Caco-2 (cell line): ENCODE measurements at regions of chr10 and their contacts with region 1.

Region 1: DNA sequence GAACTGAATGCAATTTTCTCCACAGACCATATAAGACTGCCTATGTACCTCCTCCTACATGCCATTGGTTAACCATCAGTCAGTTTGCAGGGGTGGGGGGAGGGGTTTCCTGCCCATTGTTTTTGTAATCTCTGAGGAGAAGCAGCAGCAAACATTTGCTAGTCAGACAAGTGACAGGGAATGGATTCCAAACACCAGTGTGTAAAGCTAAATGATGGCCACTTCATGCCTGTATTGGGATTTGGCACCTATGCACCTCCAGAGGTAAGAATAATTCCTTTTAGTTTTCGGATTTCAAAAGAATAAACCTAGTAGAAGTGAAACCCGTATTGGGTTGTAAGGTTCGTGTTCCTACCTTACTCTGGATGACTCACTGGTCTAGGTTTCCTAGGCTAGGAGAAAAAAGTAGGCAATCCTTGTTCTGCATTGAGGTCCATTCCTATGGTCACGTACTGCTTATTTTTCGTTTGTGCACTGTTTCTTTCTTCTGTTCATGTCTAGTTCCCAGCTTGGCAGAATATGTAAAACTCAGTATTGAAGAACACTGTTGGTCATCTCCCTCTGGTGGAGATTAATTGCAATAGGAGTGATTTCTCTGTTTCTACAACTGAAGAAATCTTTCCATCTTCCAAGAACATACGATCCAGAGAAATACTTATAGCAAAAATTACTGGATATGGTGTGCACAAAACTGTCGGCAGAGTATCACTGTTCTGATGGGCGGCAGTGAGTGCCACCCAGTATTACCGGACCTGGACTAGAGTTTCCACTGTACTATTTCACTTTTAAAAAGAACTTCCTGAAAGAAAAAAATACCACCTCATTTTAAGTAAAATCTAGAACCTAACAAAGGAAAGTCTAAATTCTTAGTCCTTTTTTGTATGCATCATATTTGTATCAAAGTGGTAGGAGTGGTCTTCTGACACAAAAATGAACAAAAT is at the start of gene AKR1C3:
- DNase-seq: peak in 1 of 2 experiments; percentile 57
- H3K4me3 ChIP-seq: peak within 1 kb of the TSS; percentile 47
- H3K4me3 Mint-ChIP-seq: peak within 1 kb of the TSS; percentile 73
- H3K27ac Mint-ChIP-seq: peak within 1 kb of the TSS; percentile 67
- H3K4me1 ChIP-seq: peaks cover 9% of the 10 kb centered on the region
- H3K4me1 Mint-ChIP-seq: peaks cover 6% of the 10 kb centered on the region
- H3K27me3 ChIP-seq: no peaks in the 10 kb centered on the region
- H3K27me3 Mint-ChIP-seq: no peaks in the 10 kb centered on the region
- CTCF ChIP-seq: peak; percentile 70 to 80
- total RNA-seq, gene AKR1C3: 96.8 and 115 TPM in 2 replicates

Region 2: GRCh38 chr10:5014936-5015335 is 79.6 kb before region 1 on chr10:
- CTCF ChIA-PET with region 1: no interaction called
- POLR2A ChIA-PET with region 1: no interaction called
- intact Hi-C with region 1: loop called (anchors 1 kb)
- DNase-seq: peak; percentile 48 to 60
- H3K4me3 ChIP-seq: no peak overlapping the region
- H3K4me3 Mint-ChIP-seq: no peak overlapping the region
- H3K27ac Mint-ChIP-seq: no peak overlapping the region
- H3K4me1 ChIP-seq: 0 out of 2 replicates have a peak, but pooled peaks cover 1% of the 10 kb centered on the region
- H3K4me1 Mint-ChIP-seq: no peaks in the 10 kb centered on the region
- H3K27me3 ChIP-seq: no peaks in the 10 kb centered on the region
- H3K27me3 Mint-ChIP-seq: no peaks in the 10 kb centered on the region
- CTCF ChIP-seq: peak; percentile 55 to 67

Region 3: DNA sequence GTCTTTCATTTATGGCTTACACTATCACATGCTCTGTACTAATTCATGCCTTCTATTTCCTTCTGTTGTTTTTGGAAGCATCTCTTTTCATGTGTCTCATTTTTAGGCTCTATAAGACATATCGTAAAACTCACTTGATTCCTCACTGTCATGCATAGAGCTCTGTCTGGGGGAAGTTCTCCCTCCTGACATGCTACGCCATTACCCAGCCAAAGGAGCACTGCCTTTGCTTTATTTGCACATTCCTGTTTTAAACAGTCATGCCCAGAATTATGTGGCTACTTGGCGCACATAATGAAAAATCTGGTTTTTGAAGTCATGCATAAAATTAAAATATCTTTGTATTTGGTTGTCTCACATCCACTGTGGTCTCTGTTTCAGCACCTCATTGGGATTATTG is 17.9 kb before region 1 on chr10:
- CTCF ChIA-PET with region 1: interaction called, 3 read pairs
- POLR2A ChIA-PET with region 1: no interaction called
- intact Hi-C with region 1: loop called (anchors 1 kb)
- DNase-seq: no peak
- H3K4me3 ChIP-seq: no peak overlapping the region
- H3K4me3 Mint-ChIP-seq: no peak overlapping the region
- H3K27ac Mint-ChIP-seq: no peak overlapping the region
- H3K4me1 ChIP-seq: peaks cover 53% of the 10 kb centered on the region
- H3K4me1 Mint-ChIP-seq: peaks cover 56% of the 10 kb centered on the region
- H3K27me3 ChIP-seq: no peaks in the 10 kb centered on the region
- H3K27me3 Mint-ChIP-seq: no peaks in the 10 kb centered on the region
- CTCF ChIP-seq: no peak

Region 4: GRCh38 chr10:5199398-5199797 is 104.9 kb after region 1 on chr10:
- CTCF ChIA-PET with region 1: no interaction called
- POLR2A ChIA-PET with region 1: no interaction called
- intact Hi-C with region 1: loop called (anchors 5 kb)
- DNase-seq: no peak
- H3K4me3 ChIP-seq: no peak overlapping the region
- H3K4me3 Mint-ChIP-seq: no peak overlapping the region
- H3K27ac Mint-ChIP-seq: no peak overlapping the region
- H3K4me1 ChIP-seq: peaks cover 23% of the 10 kb centered on the region
- H3K4me1 Mint-ChIP-seq: peaks cover 11% of the 10 kb centered on the region
- H3K27me3 ChIP-seq: no peaks in the 10 kb centered on the region
- H3K27me3 Mint-ChIP-seq: no peaks in the 10 kb centered on the region
- CTCF ChIP-seq: no peak

Region 5: DNA sequence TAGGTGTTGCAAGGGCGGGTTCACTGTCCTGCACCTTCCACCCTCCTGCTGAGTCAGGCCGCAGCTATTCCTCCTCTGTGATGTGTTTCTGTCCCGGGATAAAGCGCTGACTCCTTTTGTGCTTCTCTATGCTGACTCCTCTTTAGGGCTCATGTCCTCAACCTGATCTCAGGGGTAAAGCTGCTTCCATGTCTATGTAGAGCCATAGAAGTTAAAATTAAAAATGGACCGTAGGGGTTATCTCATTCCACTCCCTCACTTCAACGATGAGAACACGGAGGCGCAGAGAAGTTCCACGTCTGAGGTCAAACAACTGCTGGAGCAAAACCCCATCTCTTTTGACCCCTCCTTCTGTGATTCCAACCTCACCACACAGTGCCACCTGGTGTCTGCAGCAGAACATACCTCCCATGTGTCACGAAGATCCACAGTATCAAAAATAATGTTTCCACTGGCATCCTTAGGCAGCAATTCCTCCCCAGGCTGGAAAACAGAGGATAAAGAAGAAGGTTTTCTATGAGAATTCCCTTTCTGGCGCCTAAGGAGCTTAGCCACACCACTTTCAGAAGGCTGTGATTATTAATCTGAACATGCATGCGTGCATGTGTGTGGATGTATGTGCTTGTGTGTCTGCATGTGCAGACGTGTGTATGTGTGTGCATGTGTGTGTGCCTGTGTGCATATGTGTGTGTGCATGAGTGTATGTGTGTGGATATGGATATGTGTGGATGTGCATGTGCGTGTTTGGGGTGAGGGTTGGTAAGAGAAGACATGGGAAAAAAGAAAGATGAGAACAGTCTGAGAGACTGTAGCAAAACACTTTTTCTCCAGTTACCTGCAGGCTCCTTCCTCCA is 189.0 kb after region 1 on chr10:
- CTCF ChIA-PET with region 1: no interaction called
- POLR2A ChIA-PET with region 1: no interaction called
- intact Hi-C with region 1: loop called (anchors 1 kb)
- DNase-seq: peak; percentile 81 to 83
- H3K4me3 ChIP-seq: no peak overlapping the region
- H3K4me3 Mint-ChIP-seq: peak overlapping the region; percentile 50
- H3K27ac Mint-ChIP-seq: peak overlapping the region; percentile 22
- H3K4me1 ChIP-seq: no peaks in the 10 kb centered on the region; the same call in 1 of the 2 replicates
- H3K4me1 Mint-ChIP-seq: peaks cover 7% of the 10 kb centered on the region
- H3K27me3 ChIP-seq: no peaks in the 10 kb centered on the region
- H3K27me3 Mint-ChIP-seq: peaks cover 7% of the 10 kb centered on the region
- CTCF ChIP-seq: peak; percentile 88 to 92

Region 6: GRCh38 chr10:6493521-6494441 is 1399.2 kb after region 1 on chr10:
- CTCF ChIA-PET with region 1: no interaction called
- POLR2A ChIA-PET with region 1: no interaction called
- intact Hi-C with region 1: no loop called
- DNase-seq: no peak
- H3K4me3 ChIP-seq: no peak overlapping the region
- H3K4me3 Mint-ChIP-seq: no peak overlapping the region
- H3K27ac Mint-ChIP-seq: no peak overlapping the region
- H3K4me1 ChIP-seq: no peaks in the 10 kb centered on the region
- H3K4me1 Mint-ChIP-seq: no peaks in the 10 kb centered on the region
- H3K27me3 ChIP-seq: no peaks in the 10 kb centered on the region
- H3K27me3 Mint-ChIP-seq: peaks cover 3% of the 10 kb centered on the region
- CTCF ChIP-seq: no peak